CD4-positive, alpha-beta memory T cell (primary cell): ENCODE measurements at regions of chr6 and their contacts with region 1.

Region 1: GRCh38 chr6:11224252-11224965 is 8.1 kb downstream of the NEDD9 start:
- DNase-seq: peak; percentile 58 to 69 (median 61)
- H3K4me3 ChIP-seq: peak overlapping the region in 1 of 2 donors; percentile 54
- H3K4me3 Mint-ChIP-seq: peak overlapping the region; percentile 66 to 89 (median 83)
- H3K27ac ChIP-seq: peak overlapping the region; percentile 43
- H3K27ac Mint-ChIP-seq: peak overlapping the region; percentile 80 to 97 (median 96)
- H3K4me1 ChIP-seq: peaks cover 45% of the 10 kb centered on the region
- H3K4me1 Mint-ChIP-seq: peaks cover 34 to 70% (median 45%) of the 10 kb centered on the region in 4 donors
- H3K27me3 ChIP-seq: no peaks in the 10 kb centered on the region
- H3K27me3 Mint-ChIP-seq: no peaks in the 10 kb centered on the region

Region 2: DNA sequence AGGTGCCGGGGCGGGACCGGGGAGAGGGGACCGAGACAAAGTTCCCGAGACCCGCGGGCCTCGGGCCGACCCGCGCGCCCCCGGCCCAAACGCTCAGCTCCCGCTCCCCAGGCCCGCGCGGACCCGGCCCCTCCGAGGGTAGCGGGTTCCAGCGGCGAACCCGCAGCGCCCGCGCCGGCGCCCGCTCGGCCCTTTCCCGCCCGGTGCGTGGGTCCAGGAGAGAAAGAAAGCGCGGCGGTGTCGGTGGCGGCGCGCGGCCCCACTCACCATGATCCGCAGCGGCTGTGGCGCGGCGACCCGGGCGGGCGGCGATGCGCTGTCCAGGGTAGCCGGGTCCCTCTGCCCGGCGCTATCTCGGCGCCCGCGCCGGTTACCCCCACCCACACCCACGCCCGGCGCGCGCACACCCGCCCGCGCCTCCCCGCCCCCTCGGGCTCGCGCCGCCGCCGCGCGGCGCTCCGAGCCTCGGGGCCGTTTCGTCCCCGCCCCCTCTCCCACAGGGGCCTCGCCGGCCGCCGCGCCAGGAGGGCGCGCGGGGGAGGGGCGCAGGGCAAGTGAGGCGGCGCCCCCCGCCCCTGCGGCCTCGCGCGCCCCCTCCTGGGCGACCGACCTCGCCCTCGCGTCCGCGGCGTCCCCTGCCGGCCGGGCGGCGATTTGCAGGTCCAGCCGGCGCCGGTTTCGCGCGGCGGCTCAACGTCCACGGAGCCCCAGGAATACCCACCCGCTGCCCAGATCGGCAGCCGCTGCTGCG is 180.3 kb before region 1 on chr6 and contains the start of gene ELOVL2:
- CTCF ChIA-PET with region 1: no interaction called
- POLR2A ChIA-PET with region 1: no interaction called
- intact Hi-C with region 1: no loop called
- DNase-seq: peak in 2 of 5 donors; percentile 8 to 11
- H3K4me3 ChIP-seq: no peak within 1 kb of the TSS
- H3K4me3 Mint-ChIP-seq: peak within 1 kb of the TSS; percentile 70 to 89 (median 82)
- H3K27ac ChIP-seq: no peak within 1 kb of the TSS
- H3K27ac Mint-ChIP-seq: peak within 1 kb of the TSS in 3 of 7 donors; percentile 7 to 71 (median 19)
- H3K4me1 ChIP-seq: peaks cover 5% of the 10 kb centered on the region
- H3K4me1 Mint-ChIP-seq: peaks cover 9 to 13% (median 11%) of the 10 kb centered on the region in 4 donors
- H3K27me3 ChIP-seq: peaks cover 9% of the 10 kb centered on the region
- H3K27me3 Mint-ChIP-seq: peaks cover 47 to 49% of the 10 kb centered on the region in 2 donors
- total RNA-seq, gene ELOVL2: not detected

Region 3: DNA sequence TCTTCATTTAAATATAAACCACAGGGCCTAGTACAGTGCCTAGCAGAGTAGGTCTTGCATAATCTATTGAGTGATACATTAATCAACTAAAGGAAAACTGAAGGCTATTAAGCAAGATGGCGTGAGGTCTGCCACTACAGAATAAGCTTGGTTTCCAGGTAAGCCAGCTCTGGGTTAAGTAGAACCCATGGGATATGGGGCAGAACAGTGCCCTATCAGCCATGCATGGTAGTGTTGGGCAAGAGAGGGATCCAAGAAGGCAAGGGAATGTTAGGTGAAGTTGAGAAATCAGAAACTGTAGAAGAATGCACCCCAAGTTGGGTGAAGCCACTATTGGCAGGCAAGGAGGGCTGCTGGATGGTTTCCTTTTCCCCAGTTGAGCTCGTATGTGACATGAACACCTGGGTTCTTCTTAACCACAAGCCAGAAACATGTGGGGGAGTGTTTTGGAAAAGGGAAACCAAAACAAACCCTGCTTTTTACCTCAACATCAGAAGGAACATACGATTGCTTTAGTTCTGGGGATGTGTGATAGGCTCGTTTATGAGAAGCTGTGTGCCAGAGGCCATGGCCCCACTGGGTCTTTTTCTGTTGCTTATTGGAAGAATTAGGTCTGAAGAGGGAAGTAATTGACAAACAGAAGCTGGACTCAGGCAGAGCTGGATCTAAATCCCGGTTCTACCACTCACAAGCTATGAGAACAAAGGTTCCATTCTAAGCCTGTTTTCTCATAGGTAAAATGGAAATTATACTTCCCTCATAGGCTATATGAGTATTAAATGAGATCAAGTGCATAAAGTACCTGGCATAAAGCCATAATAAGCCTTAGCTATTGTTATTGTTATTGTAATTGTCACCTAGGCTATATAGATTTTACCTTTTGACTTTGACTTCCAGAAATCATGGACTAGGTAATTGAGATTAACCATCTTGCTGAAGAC is 25.5 kb before region 1 on chr6:
- CTCF ChIA-PET with region 1: interaction called, 7 read pairs
- POLR2A ChIA-PET with region 1: interaction called, 10 read pairs
- intact Hi-C with region 1: no loop called
- DNase-seq: peak; percentile 60 to 77 (median 72)
- H3K4me3 ChIP-seq: peak overlapping the region in 1 of 2 donors; percentile 27
- H3K4me3 Mint-ChIP-seq: peak overlapping the region; percentile 33 to 80 (median 63)
- H3K27ac ChIP-seq: peak overlapping the region; percentile 52
- H3K27ac Mint-ChIP-seq: peak overlapping the region; percentile 79 to 97 (median 94)
- H3K4me1 ChIP-seq: peaks cover 53% of the 10 kb centered on the region
- H3K4me1 Mint-ChIP-seq: peaks cover 40 to 72% (median 59%) of the 10 kb centered on the region in 4 donors
- H3K27me3 ChIP-seq: no peaks in the 10 kb centered on the region
- H3K27me3 Mint-ChIP-seq: no peaks in the 10 kb centered on the region

Region 4: DNA sequence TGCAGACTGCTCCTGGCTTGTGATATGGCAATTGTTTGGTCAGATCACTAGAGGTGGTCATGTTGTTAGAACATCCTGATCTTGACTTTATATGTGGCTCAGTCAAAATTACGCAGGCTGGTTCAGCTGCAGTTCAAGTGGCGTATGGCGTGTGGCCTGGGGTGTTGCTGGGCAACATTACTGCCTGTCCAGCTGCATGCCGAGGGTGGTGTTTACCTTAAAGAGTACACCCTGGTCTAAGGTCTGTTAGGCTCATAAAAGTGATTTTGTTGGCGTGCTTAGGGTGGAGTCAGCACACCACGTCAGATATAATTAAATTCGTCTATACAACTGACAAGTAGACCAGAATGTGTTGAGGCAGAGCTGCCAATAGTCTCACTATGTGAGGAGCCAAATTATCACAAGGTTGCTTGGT is 63.6 kb after region 1 on chr6:
- CTCF ChIA-PET with region 1: no interaction called
- POLR2A ChIA-PET with region 1: no interaction called
- intact Hi-C with region 1: no loop called
- DNase-seq: no peak
- H3K4me3 ChIP-seq: no peak overlapping the region
- H3K4me3 Mint-ChIP-seq: no peak overlapping the region
- H3K27ac ChIP-seq: no peak overlapping the region
- H3K27ac Mint-ChIP-seq: peak overlapping the region in 1 of 7 donors; percentile 48
- H3K4me1 ChIP-seq: peaks cover 13% of the 10 kb centered on the region
- H3K4me1 Mint-ChIP-seq: peaks cover 3 to 26% (median 11%) of the 10 kb centered on the region in 4 donors
- H3K27me3 ChIP-seq: no peaks in the 10 kb centered on the region
- H3K27me3 Mint-ChIP-seq: no peaks in the 10 kb centered on the region

Region 5: GRCh38 chr6:11738661-11739375 is 514.4 kb after region 1 on chr6:
- CTCF ChIA-PET with region 1: no interaction called
- POLR2A ChIA-PET with region 1: no interaction called
- intact Hi-C with region 1: no loop called
- DNase-seq: no peak
- H3K4me3 ChIP-seq: no peak overlapping the region
- H3K4me3 Mint-ChIP-seq: no peak overlapping the region
- H3K27ac ChIP-seq: no peak overlapping the region
- H3K27ac Mint-ChIP-seq: no peak overlapping the region
- H3K4me1 ChIP-seq: no peaks in the 10 kb centered on the region
- H3K4me1 Mint-ChIP-seq: peaks cover 0 to 7% (median 2%) of the 10 kb centered on the region in 4 donors
- H3K27me3 ChIP-seq: no peaks in the 10 kb centered on the region
- H3K27me3 Mint-ChIP-seq: peaks cover 4 to 6% of the 10 kb centered on the region in 2 donors